HCT116 (cell line): ENCODE measurements at regions of chr1 and their contacts with region 1.

Region 1: GRCh38 chr1:86380257-86380861 is 15.8 kb downstream of the ODF2L start:
- DNase-seq: peak; percentile 71
- ATAC-seq: peak; percentile 61
- H3K4me3 ChIP-seq: no peak overlapping the region
- H3K27ac ChIP-seq: no peak overlapping the region
- H3K4me1 ChIP-seq: no peaks in the 10 kb centered on the region
- H3K27me3 ChIP-seq: no peaks in the 10 kb centered on the region
- CTCF ChIP-seq: peak; percentile 62 to 70 (median 70)
- POLR2A ChIP-seq: no peak
- RAD21 ChIP-seq: peak; percentile 80

Region 2: DNA sequence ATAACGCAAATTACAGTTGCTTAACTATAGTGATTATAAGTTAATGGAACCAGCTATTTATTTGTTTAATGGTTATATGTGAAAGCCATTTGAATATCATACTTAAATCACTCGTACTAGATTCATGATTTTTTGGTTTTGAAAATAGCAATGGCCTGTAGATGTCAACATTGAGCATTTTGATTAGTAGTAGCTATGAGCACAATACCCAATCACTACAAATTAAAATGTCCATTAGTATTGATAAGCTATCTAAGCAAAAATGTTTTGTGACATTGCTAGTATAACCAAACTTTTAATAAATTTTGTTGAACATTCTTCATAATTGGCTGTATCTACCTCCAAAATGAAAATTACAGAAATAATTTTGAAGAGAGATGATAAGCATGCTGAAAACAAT is 233.8 kb before region 1 on chr1:
- CTCF ChIA-PET with region 1: no interaction called
- POLR2A ChIA-PET with region 1: no interaction called
- RAD21 ChIA-PET with region 1: no interaction called
- intact Hi-C with region 1: no loop called
- DNase-seq: no peak
- ATAC-seq: no peak
- H3K4me3 ChIP-seq: no peak overlapping the region
- H3K27ac ChIP-seq: no peak overlapping the region
- H3K4me1 ChIP-seq: no peaks in the 10 kb centered on the region
- H3K27me3 ChIP-seq: no peaks in the 10 kb centered on the region
- CTCF ChIP-seq: peak in 1 of 3 experiments; percentile 30; a peak in 1 of 6 replicates
- POLR2A ChIP-seq: no peak
- RAD21 ChIP-seq: 0 out of 2 replicates have a peak, but pooled peaks have one; percentile 4

Region 3: DNA sequence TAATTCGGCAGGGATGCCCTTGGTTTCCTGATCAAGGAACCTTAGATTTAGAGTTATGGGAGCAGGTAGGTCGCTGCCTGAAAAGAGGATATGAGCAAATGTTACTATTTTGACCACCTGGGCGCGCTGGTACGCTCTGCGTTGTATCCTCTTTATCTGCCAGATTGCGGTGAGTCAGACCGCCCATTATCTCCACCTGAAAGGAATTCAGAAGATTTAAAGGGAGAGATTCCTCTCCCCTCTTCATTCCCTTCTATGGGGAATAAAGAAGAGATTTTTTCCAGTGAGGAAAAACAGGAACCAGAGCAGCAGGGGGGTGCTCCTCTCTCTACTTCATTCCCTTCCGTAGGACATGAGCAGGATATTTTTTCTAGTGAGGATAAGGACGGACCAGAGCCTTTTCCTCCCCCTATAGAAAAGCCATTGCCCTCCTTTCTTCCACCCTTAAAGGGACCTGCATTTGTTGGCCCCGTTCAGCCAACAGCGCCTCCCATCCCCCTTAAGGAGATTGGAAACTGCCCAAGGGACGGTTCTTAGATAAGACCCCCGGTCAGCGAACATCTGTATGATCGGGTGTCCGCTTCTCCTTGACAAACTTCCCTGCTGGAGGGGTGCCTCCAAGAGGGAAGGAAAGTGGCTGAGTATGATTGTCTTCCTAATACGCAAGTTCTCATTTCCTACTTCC is 122.5 kb after region 1 on chr1:
- CTCF ChIA-PET with region 1: interaction called, 3 read pairs
- POLR2A ChIA-PET with region 1: no interaction called
- RAD21 ChIA-PET with region 1: no interaction called
- intact Hi-C with region 1: loop called (anchors 1 kb)
- DNase-seq: no peak
- ATAC-seq: no peak
- H3K4me3 ChIP-seq: no peak overlapping the region
- H3K27ac ChIP-seq: no peak overlapping the region
- H3K4me1 ChIP-seq: no peaks in the 10 kb centered on the region
- H3K27me3 ChIP-seq: no peaks in the 10 kb centered on the region
- CTCF ChIP-seq: no peak
- POLR2A ChIP-seq: no peak
- RAD21 ChIP-seq: no peak

Region 4: DNA sequence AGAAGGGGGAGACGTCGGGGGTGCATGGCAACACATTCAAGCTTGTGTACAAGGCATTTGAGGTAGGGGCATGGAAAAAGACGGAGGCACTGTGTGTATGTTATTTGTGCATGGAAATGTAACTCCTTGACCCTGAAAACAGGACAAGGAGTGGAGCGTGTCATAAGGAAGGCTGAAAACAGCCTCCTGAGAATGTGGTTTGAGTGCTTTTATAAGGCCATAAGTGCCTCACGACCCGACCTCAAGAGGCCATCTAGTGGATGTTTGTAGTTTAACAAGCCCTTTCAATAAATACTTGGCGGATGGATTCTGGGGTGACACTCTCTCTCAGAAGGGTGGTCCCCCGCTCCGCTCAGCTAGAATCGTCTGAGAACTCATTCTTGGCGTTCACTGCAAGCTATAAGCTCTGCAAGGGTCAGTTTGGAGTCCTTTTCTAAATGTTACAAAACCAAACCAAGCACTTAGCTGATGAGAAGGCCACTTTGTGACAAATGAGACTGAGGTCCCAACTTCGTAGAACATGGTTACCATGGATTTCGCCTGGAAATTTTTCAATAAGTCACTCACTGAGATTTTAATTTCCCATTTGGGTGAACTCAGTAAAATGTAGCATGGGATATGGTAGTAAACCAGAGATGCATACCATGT is 127.7 kb after region 1 on chr1:
- CTCF ChIA-PET with region 1: interaction called, 3 read pairs
- POLR2A ChIA-PET with region 1: no interaction called
- RAD21 ChIA-PET with region 1: no interaction called
- intact Hi-C with region 1: loop called (anchors 2 kb)
- DNase-seq: peak; percentile 19
- ATAC-seq: peak; percentile 66; the same call in 1 of the 2 replicates
- H3K4me3 ChIP-seq: no peak overlapping the region
- H3K27ac ChIP-seq: no peak overlapping the region
- H3K4me1 ChIP-seq: no peaks in the 10 kb centered on the region
- H3K27me3 ChIP-seq: no peaks in the 10 kb centered on the region
- CTCF ChIP-seq: peak in 2 of 3 experiments; percentile 40 to 55; a peak in 4 of 6 replicates
- POLR2A ChIP-seq: no peak
- RAD21 ChIP-seq: peak; percentile 43